ENCODE measurements at regions of chr2 and their contacts with region 1.

Region 1: DNA sequence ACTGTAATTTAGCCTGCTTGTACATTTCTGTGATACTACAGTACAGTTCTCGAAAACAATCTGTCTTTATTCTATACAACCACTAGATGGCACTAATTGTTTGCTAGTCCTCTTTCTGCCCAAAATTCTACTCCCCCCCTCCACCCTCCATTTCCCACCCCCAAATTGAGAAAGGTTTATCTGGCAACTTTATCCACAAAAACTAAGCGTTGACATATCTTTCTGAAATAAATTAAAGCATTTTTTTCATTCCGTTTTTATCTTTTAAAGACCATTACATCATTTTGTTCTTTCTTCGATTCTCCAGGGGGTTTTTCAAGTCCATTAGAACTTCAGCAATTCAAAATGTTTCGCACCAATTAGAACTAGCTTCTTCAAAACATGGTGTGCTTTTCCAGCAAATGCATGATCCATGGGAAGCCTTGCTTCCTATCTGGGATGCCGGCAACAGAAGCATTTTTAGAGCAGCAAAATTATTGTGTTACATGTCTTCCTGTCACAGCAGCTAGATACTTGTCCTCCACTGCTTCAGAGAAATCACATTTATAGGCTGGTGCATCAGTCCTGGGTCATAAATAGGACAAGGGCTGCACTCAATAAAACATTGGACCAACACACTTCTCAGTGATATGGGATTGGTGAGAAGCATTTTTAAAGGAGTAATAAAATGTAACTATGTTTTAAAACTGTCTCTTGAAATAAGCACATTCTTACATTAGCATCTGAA is 241.3 kb downstream of the PAX3 start:
- DNase-seq: no peak

Region 2: DNA sequence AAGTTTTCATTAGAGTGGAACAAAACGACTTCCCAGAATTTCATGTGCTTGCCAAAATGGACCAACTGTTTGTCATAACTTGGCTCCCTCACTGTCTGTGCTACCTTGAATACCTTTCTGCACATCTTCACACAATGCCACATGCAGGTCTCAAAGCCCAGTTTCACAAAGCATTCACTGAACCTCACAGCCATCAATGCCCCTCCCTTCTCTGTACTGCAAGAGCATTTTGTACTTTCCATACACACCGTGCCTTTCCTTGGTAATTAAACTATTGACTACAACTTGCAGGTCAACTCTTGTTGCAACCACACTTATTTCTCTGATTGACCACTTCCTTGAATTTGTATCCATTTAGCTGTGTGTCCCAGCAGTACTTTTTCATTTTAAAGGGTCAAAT is 190.7 kb after region 1 on chr2:
- intact Hi-C with region 1: no loop called
- DNase-seq: no peak

Region 3: DNA sequence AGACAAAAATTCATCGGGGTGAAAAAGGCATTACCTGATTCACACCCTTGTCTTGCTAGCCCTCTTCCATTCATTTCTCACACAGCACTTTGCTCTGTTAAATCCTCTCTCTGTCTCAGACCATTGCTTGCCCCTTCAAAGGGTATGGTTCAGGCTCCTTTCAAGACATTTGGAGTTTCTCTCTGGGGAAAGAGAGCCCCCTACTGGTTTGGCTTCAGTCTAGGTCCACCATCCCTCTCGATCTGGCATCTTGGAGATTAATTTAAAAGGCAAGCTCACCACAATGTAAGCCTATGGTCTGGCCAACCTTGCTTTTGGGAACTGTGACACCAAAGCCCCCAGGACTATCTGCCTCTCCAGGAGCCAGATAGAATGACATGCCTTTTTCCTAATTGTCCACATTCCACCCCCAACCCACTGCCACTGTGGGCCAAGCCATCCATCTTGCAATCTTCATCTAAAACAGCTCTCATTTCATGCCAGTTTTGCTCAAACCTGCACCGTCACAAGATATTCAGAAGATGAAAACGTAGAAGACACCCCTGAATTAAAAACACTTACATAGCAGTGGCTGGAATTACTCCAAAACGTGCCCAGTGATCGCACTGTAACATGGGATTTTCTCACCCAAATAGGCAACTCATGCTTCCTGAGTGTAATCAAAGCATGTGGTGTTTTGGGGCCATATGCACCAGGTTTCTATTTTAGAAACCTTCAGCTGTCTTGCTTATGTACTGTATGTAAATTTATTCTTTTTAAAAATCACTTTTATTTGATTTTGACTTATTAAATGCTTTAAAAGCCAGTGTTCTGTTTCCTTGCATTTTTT is 504.5 kb after region 1 on chr2:
- intact Hi-C with region 1: loop called (anchors 5 kb)
- DNase-seq: no peak

Region 4: GRCh38 chr2:222613715-222614331 is 556.3 kb after region 1 on chr2:
- intact Hi-C with region 1: loop called (anchors 2 kb)
- DNase-seq: peak in 1 of 10 donors; percentile 15

Measured in posterior cingulate gyrus (tissue), 11 donors.